ENCODE measurements at regions of chr5 and their contacts with region 1.

Region 1: GRCh38 chr5:154956712-154957111 is 15.8 kb downstream of the MRPL22 start:
- DNase-seq: no peak

Region 2: GRCh38 chr5:154351566-154351965 is 605.1 kb before region 1 on chr5:
- intact Hi-C with region 1: loop called in 1 of 2 experiments (anchors 5 kb)
- DNase-seq: no peak

Region 3: DNA sequence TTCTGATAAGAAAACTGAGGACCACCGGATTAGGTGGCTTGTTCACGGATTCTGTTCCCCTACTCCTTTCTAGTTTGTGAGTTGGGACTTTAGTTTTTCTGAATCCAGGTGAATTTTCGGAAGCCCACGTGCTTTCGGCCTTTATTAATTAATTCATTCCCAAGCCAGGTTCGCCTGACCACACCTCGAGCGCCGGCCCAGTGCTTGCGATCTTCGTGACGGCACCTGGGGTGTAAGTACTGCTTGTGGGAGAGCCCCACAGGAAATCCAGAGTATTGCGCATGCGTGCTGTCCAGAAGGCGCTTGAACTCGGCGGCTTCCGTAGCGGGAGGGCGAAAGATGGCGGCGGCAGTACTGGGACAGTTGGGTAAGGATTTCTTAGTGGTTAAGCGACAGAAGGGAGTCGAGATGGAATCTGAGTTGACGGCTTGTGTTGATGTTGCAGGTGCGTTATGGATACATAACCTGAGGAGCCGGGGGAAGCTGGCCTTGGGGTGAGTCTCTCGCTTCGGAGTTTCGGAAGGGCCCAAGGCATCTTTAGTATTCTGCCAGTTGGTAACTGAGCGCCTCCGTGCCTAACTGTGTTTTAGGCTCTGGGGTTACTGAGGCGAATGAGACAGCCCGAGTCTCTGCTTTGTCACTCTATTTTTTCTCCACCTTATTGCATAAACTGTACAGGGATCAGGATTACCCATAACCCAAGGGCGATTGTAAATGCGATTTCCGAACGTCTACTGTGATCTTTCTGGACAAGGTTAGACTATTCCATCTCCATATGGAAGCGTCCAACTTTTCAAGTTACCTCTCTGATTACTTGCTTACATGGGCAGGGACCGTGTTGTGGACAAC is 15.7 kb before region 1 on chr5 and contains the start of gene MRPL22:
- intact Hi-C with region 1: no loop called
- DNase-seq: peak; percentile 97
- total RNA-seq, gene MRPL22: 40.1 to 40.9 TPM